AG04449 (cell line): ENCODE measurements at regions of chr6 and their contacts with region 1.

Region 1: GRCh38 chr6:147506704-147507114 is 1.8 kb upstream of the SAMD5 start:
- DNase-seq: no peak
- H3K4me3 ChIP-seq: peak overlapping the region; percentile 72
- CTCF ChIP-seq: peak; percentile 87

Region 2: GRCh38 chr6:147447835-147448611 is 58.7 kb before region 1 on chr6:
- CTCF ChIA-PET with region 1: no interaction called
- POLR2A ChIA-PET with region 1: no interaction called
- DNase-seq: no peak
- H3K4me3 ChIP-seq: no peak overlapping the region
- CTCF ChIP-seq: no peak

Region 3: GRCh38 chr6:147486683-147487082 is 20.0 kb before region 1 on chr6:
- CTCF ChIA-PET with region 1: interaction called, 13 read pairs
- POLR2A ChIA-PET with region 1: no interaction called
- DNase-seq: no peak
- H3K4me3 ChIP-seq: no peak overlapping the region
- CTCF ChIP-seq: no peak

Region 4: GRCh38 chr6:147538821-147539220 is 32.1 kb after region 1 on chr6:
- CTCF ChIA-PET with region 1: no interaction called
- POLR2A ChIA-PET with region 1: no interaction called
- DNase-seq: no peak
- H3K4me3 ChIP-seq: no peak overlapping the region
- CTCF ChIP-seq: no peak

Region 5: DNA sequence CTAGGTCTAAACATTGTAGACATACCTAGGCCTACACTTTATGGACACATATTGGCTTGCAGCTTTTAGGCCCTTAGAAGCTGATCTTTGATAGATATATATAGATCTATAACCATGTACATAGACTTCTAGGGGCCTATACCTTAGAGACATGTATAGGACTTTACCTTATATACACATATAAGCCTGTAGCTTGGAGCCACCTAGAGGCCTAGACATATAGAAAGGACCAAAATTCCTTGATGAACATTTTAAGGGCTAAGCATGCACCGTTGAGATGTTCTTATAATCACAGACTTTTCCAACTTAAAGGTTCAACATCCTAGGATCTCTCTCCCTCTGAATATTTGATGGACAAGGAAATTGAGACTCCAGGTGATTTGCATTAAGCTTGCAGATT is 464.3 kb after region 1 on chr6:
- CTCF ChIA-PET with region 1: interaction called, 22 read pairs
- POLR2A ChIA-PET with region 1: no interaction called
- DNase-seq: no peak
- H3K4me3 ChIP-seq: no peak overlapping the region
- CTCF ChIP-seq: peak; percentile 9

Region 6: DNA sequence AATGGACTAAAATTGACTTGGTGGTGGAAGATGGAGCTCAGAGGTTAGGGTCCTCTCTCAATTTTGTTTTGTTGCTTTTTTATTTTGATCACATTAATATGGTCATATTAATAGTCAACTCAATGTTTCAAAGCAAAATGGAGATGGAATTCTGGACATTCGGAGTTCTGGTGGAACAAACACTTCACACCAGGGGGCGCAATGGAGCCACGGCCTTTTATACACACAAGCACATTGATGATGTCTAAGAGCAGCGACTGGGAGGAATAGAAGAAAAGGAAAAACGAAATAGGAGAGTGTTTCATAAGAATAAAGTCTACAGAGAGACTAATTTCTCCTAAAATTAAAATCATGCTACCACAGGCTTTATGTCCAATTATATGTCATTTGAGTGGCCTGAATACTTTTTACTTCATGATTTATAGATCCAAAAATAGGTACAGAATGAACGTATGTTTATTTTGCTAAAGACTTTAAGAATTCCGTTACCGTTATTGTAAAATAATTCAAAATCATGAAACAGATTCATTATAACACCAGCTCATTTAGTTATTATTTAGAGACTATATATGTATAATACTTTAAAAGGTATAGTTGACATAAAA is 638.3 kb after region 1 on chr6:
- CTCF ChIA-PET with region 1: interaction called, 10 read pairs
- POLR2A ChIA-PET with region 1: no interaction called
- DNase-seq: peak; percentile 4
- H3K4me3 ChIP-seq: no peak overlapping the region
- CTCF ChIP-seq: peak; percentile 72